Dendritic cell treated with granulocyte-macrophage colony-stimulating factor and Interleukin-4, amounts not matched to agents 40 ng/mL and 50 ng/mL, for 4 days (primary cell): ENCODE measurements at regions of chr4 and their contacts with region 1.

Region 1: DNA sequence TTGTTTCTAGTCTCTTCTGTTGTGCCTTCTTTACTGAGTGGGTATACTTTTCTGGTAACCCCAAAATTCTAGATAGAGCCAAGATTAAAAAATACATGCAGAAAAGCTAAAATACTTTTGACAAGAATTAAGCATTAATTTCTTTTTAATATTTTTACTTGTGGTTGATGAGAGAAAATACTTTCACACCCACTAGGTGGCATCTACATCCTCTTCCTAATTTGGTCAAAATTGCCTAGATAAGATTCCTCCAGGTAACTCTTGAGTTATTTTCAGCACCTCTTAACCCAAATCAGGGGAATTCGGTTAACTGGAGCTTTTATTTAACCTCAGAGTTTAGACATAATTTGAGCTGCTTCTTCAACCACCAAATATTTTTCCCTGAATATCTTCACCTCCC is 28.4 kb upstream of the COX7B2 start:
- H3K4me3 Mint-ChIP-seq: no peak overlapping the region
- H3K27ac Mint-ChIP-seq: no peak overlapping the region
- H3K4me1 Mint-ChIP-seq: no peaks in the 10 kb centered on the region
- H3K27me3 Mint-ChIP-seq: peaks cover 3% of the 10 kb centered on the region

Region 2: DNA sequence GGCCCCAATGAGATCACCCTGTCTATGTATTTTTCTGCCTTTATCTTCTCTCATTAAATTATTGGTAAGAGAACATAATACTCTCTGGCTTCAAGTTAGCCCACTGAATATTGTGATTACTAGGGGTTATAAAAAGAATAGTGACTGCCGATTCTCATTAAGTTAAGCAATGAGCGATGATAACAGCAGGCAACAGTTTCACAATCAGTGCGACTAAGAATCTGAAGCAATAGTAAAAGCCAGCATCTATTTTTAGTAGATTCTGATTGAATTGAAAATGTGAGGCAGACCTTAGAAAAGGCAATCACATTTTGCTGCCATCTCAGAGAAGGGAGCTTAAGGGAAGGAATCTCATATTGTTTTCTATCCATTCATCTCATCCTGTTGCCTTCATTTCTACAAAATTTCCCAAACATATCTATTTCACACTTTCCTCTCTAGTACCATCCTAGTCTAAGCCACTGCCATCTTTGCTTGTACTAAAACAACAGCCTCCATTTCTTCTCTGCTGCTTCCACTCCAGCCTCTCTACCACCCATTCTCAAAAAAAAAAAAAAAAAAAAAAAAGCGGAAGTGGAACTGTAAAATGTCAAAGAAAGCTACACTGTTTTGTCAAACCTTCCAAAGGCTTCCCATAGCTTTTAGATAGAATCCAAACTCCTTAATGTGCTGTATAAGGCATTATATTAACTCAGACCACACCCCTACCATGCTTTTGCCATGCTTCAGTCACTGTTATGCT is 38.5 kb after region 1 on chr4:
- intact Hi-C with region 1: no loop called
- H3K4me3 Mint-ChIP-seq: peak overlapping the region; percentile 21
- H3K27ac Mint-ChIP-seq: no peak overlapping the region
- H3K4me1 Mint-ChIP-seq: peaks cover 18% of the 10 kb centered on the region
- H3K27me3 Mint-ChIP-seq: peaks cover 2% of the 10 kb centered on the region

Region 3: GRCh38 chr4:47032415-47033106 is 95.1 kb after region 1 on chr4:
- intact Hi-C with region 1: loop called (anchors 5 kb)
- H3K4me3 Mint-ChIP-seq: peak overlapping the region; percentile 60
- H3K27ac Mint-ChIP-seq: no peak overlapping the region
- H3K4me1 Mint-ChIP-seq: peaks cover 19% of the 10 kb centered on the region
- H3K27me3 Mint-ChIP-seq: peaks cover 44% of the 10 kb centered on the region